H1 (cell line): ENCODE measurements at regions of chrX and their contacts with region 1.

Region 1: GRCh38 chrX:135112096-135112729 is 8.1 kb downstream of the ETDB start:
- DNase-seq: peak in 1 of 2 experiments; percentile 58
- H3K4me3 ChIP-seq: no peak overlapping the region
- H3K27ac ChIP-seq: no peak overlapping the region
- H3K4me1 ChIP-seq: no peaks in the 10 kb centered on the region
- H3K27me3 ChIP-seq: no peaks in the 10 kb centered on the region
- CTCF ChIP-seq: peak in 2 of 3 experiments; percentile 60 to 73; a peak in 3 of 4 replicates
- EP300 ChIP-seq: no peak
- POLR2A ChIP-seq: no peak
- RAD21 ChIP-seq: peak; percentile 59 to 71

Region 2: DNA sequence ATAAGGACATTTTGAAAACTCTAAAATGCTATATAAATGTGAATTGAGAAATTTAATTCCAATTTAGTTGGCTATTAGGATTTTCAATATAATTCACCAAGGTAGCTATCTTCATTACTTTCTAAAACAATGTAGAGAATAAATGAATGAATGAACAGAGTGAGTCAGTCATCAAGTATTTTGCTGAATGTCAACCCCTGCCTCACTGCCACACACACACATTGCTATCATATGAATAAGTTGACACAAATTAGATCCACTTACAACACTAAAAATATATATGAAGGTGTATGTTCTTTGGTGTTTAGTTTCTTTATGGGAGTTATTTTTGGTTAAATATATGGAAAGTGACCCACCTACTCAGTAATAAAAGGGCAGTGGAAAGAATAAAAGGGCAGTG is 262.8 kb before region 1 on chrX:
- CTCF ChIA-PET with region 1: no interaction called
- POLR2A ChIA-PET with region 1: no interaction called
- DNase-seq: no peak
- H3K4me3 ChIP-seq: no peak overlapping the region
- H3K27ac ChIP-seq: no peak overlapping the region
- H3K4me1 ChIP-seq: no peaks in the 10 kb centered on the region
- H3K27me3 ChIP-seq: no peaks in the 10 kb centered on the region
- CTCF ChIP-seq: no peak
- EP300 ChIP-seq: no peak
- POLR2A ChIP-seq: no peak
- RAD21 ChIP-seq: no peak

Region 3: GRCh38 chrX:135185795-135186443 is 73.7 kb after region 1 on chrX:
- CTCF ChIA-PET with region 1: interaction called, 16 read pairs
- POLR2A ChIA-PET with region 1: no interaction called
- DNase-seq: peak in 1 of 2 experiments; percentile 25
- H3K4me3 ChIP-seq: no peak overlapping the region
- H3K27ac ChIP-seq: no peak overlapping the region
- H3K4me1 ChIP-seq: no peaks in the 10 kb centered on the region
- H3K27me3 ChIP-seq: no peaks in the 10 kb centered on the region
- CTCF ChIP-seq: peak; percentile 16 to 70 (median 58)
- EP300 ChIP-seq: no peak
- POLR2A ChIP-seq: no peak
- RAD21 ChIP-seq: peak; percentile 83 to 89